Caco-2 (cell line): ENCODE measurements at regions of chr6 and their contacts with region 1.

Region 1: GRCh38 chr6:3977875-3978711 is 100.8 kb downstream of the FAM217A start:
- DNase-seq: peak; percentile 64
- H3K4me3 ChIP-seq: no peak overlapping the region
- H3K4me3 Mint-ChIP-seq: no peak overlapping the region
- H3K27ac Mint-ChIP-seq: no peak overlapping the region
- H3K4me1 ChIP-seq: no peaks in the 10 kb centered on the region
- H3K4me1 Mint-ChIP-seq: no peaks in the 10 kb centered on the region
- H3K27me3 ChIP-seq: no peaks in the 10 kb centered on the region
- H3K27me3 Mint-ChIP-seq: no peaks in the 10 kb centered on the region
- CTCF ChIP-seq: peak; percentile 51 to 68

Region 2: DNA sequence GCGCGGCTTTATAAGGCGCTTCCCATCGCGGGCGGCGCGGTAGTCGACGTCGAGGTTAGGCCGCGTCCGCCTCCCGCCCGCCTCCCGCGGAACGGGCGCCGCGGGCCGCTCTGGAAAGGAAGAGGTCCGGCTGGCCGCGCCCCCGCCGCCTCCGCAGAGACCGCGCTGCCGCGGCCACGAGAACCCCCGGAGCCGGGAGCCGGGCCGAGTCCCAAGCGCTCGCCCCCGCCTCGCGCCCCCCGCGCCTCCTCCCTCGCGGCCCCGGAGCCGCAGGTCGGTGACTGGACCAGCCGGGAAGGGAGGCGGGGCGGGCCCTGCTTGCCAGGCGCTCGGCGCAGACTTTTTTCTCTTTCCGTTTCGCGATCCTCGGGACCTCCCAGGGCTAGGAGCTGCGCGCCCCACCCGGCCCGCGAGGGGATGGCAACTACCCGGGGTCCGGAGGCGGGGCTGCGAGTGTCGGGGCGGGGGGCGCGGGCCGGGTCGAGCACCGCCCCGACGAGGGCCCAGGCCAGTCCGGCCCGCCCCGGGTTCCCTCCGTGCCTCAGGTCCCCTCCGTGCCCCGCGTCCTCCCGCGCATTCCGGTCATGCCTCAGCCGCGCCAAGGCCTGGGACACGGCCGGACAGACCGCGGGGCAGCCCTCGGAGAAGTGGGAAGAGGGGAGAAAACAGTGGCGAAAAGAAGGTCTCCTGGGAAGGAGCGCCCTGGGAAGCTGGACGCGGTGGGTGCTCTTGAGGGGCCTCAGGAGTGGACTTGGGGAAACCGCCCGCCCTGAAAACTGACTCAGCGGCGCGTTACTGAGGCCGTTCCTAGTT is 226.2 kb before region 1 on chr6:
- CTCF ChIA-PET with region 1: interaction called, 14 read pairs
- POLR2A ChIA-PET with region 1: no interaction called
- intact Hi-C with region 1: no loop called
- DNase-seq: peak; percentile 93 to 95
- H3K4me3 ChIP-seq: peak overlapping the region; percentile 95
- H3K4me3 Mint-ChIP-seq: peak overlapping the region; percentile 62
- H3K27ac Mint-ChIP-seq: peak overlapping the region; percentile 85
- H3K4me1 ChIP-seq: peaks cover 13% of the 10 kb centered on the region
- H3K4me1 Mint-ChIP-seq: peaks cover 14% of the 10 kb centered on the region
- H3K27me3 ChIP-seq: no peaks in the 10 kb centered on the region
- H3K27me3 Mint-ChIP-seq: no peaks in the 10 kb centered on the region
- CTCF ChIP-seq: peak; percentile 51 to 61

Region 3: GRCh38 chr6:3835055-3835731 is 142.9 kb before region 1 on chr6:
- CTCF ChIA-PET with region 1: interaction called, 11 read pairs
- POLR2A ChIA-PET with region 1: no interaction called
- intact Hi-C with region 1: loop called (anchors 1 kb)
- DNase-seq: peak; percentile 62
- H3K4me3 ChIP-seq: no peak overlapping the region
- H3K4me3 Mint-ChIP-seq: no peak overlapping the region
- H3K27ac Mint-ChIP-seq: no peak overlapping the region
- H3K4me1 ChIP-seq: peaks cover 11% of the 10 kb centered on the region
- H3K4me1 Mint-ChIP-seq: peaks cover 7% of the 10 kb centered on the region
- H3K27me3 ChIP-seq: no peaks in the 10 kb centered on the region
- H3K27me3 Mint-ChIP-seq: no peaks in the 10 kb centered on the region
- CTCF ChIP-seq: peak; percentile 65 to 73

Region 4: GRCh38 chr6:3887150-3887700 is 90.9 kb before region 1 on chr6:
- CTCF ChIA-PET with region 1: interaction called, 8 read pairs
- POLR2A ChIA-PET with region 1: no interaction called
- intact Hi-C with region 1: loop called (anchors 1 kb)
- DNase-seq: no peak
- H3K4me3 ChIP-seq: no peak overlapping the region
- H3K4me3 Mint-ChIP-seq: no peak overlapping the region
- H3K27ac Mint-ChIP-seq: no peak overlapping the region
- H3K4me1 ChIP-seq: peaks cover 16% of the 10 kb centered on the region
- H3K4me1 Mint-ChIP-seq: peaks cover 16% of the 10 kb centered on the region
- H3K27me3 ChIP-seq: no peaks in the 10 kb centered on the region
- H3K27me3 Mint-ChIP-seq: no peaks in the 10 kb centered on the region
- CTCF ChIP-seq: no peak

Region 5: DNA sequence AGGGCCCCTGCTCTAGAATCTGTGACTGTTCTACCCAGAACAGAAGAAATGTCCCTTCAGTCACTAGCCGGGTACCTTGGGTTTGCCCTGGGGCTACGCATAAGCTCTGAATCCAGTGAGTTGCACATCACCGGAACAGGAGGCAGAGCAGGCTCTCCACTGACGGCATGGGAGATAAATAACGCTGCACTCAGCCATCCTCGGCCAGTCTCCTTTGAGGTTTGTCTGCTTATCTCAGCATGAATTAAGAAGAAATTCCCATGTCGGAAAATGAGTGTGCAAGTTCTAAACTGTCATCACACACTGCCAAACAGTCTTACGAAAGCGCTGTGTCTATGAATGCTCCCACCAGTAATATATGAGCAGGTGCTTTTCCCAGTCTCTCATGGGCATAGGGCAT is 38.1 kb before region 1 on chr6:
- CTCF ChIA-PET with region 1: interaction called, 3 read pairs
- POLR2A ChIA-PET with region 1: no interaction called
- intact Hi-C with region 1: loop called (anchors 5 kb)
- DNase-seq: no peak
- H3K4me3 ChIP-seq: no peak overlapping the region
- H3K4me3 Mint-ChIP-seq: no peak overlapping the region
- H3K27ac Mint-ChIP-seq: no peak overlapping the region
- H3K4me1 ChIP-seq: no peaks in the 10 kb centered on the region
- H3K4me1 Mint-ChIP-seq: no peaks in the 10 kb centered on the region
- H3K27me3 ChIP-seq: no peaks in the 10 kb centered on the region
- H3K27me3 Mint-ChIP-seq: peaks cover 2% of the 10 kb centered on the region
- CTCF ChIP-seq: no peak

Region 6: DNA sequence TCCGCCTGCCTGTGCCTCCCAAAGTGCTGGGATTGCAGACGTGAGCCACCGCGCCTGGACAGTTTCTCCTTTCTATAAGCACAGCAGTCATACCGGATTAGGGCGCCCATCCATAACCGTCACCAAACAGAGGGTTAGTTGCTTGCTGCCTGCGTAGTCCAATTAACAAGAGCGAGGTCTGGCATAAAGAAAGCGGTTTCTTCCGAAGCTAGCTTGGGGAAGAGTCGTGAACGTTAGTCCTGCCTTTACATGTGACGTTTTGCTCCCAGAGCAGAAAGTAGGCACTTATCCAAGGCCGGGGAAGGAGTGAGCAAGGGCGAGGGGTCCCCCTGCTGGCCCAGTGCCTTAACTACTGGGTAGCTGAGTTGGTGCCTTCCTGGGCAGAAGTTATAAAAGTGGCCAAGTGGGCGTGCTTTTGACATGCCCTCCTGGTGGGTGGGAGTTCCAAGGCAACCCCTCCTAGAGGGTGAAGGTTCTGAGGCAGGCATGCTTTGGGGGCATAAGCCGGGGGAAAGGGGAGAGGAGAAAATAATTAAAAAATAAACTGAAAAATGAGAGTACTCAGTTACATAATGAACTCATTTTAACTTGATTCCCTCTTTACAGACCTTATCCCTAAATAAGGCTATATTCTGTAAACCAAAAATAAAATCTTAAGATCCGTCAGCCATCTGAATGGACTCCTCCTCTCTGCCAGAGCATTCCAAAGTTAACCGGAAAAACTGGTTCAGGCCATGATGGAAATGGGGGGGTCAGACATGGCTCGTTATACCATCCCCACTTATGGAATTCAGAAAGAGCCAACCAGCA is 12.8 kb after region 1 on chr6:
- CTCF ChIA-PET with region 1: interaction called, 11 read pairs
- POLR2A ChIA-PET with region 1: no interaction called
- intact Hi-C with region 1: loop called (anchors 1 kb)
- DNase-seq: peak; percentile 74 to 85
- H3K4me3 ChIP-seq: no peak overlapping the region
- H3K4me3 Mint-ChIP-seq: peak overlapping the region; percentile 52
- H3K27ac Mint-ChIP-seq: no peak overlapping the region
- H3K4me1 ChIP-seq: peaks cover 14% of the 10 kb centered on the region
- H3K4me1 Mint-ChIP-seq: peaks cover 11% of the 10 kb centered on the region
- H3K27me3 ChIP-seq: no peaks in the 10 kb centered on the region
- H3K27me3 Mint-ChIP-seq: no peaks in the 10 kb centered on the region
- CTCF ChIP-seq: peak; percentile 89 to 94

Region 7: GRCh38 chr6:4008324-4009047 is 30.4 kb after region 1 on chr6:
- CTCF ChIA-PET with region 1: interaction called, 8 read pairs
- POLR2A ChIA-PET with region 1: no interaction called
- intact Hi-C with region 1: loop called (anchors 1 kb)
- DNase-seq: peak in 1 of 2 experiments; percentile 68
- H3K4me3 ChIP-seq: no peak overlapping the region
- H3K4me3 Mint-ChIP-seq: no peak overlapping the region
- H3K27ac Mint-ChIP-seq: no peak overlapping the region
- H3K4me1 ChIP-seq: peaks cover 7% of the 10 kb centered on the region; the same call in 1 of the 2 replicates
- H3K4me1 Mint-ChIP-seq: peaks cover 6% of the 10 kb centered on the region
- H3K27me3 ChIP-seq: no peaks in the 10 kb centered on the region
- H3K27me3 Mint-ChIP-seq: no peaks in the 10 kb centered on the region
- CTCF ChIP-seq: peak; percentile 48 to 52